ENCODE measurements at regions of chr3 and their contacts with region 1.

Region 1: GRCh38 chr3:169836078-169836941 is 23.6 kb upstream of the LRRC34 start:
- DNase-seq: peak; percentile 70
- H3K4me3 ChIP-seq: no peak overlapping the region
- H3K27ac ChIP-seq: peak overlapping the region; percentile 63
- H3K4me1 ChIP-seq: peaks cover 38% of the 10 kb centered on the region
- CTCF ChIP-seq: no peak

Region 2: DNA sequence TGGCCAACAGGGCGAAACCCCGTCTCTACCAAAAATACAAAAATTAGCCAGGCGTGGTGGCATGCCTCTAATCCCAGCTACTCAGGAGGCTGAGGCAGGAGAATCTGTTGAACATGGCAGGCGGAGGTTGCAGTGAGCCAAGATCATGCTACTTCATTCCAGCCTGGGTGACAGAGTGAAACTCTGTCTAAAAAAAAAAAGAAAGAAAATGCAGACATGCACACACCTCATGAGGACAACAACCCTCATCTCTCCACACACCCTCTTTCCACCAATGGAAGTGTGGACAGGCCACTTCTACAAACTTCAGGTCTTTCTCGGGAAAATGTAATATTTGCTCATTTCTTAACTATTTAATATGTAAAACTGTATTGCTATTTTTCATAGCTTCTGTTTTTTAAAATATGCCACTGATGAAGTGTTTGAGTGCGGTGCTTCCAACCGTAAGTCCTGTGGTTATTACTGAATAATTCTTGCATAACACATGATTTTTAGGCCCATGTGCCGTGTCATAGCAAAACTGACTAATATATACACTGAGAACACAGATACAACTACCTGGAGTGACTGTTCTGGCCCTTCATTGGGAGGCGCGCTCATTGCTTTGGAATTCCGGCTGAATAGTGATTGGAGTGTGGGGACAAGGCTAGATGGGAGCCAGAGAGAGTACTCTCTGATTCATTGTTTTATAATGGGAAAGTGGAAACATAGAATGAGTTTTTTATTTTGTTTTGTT is 10.3 kb after region 1 on chr3:
- CTCF ChIA-PET with region 1: no interaction called
- POLR2A ChIA-PET with region 1: interaction called, 17 read pairs
- intact Hi-C with region 1: no loop called
- DNase-seq: no peak
- H3K4me3 ChIP-seq: no peak overlapping the region
- H3K27ac ChIP-seq: no peak overlapping the region
- H3K4me1 ChIP-seq: peaks cover 34% of the 10 kb centered on the region
- CTCF ChIP-seq: no peak

Measured in OCI-LY7 (cell line).